Naive thymus-derived CD4-positive, alpha-beta T cell (primary cell): ENCODE measurements at regions of chr6 and their contacts with region 1.

Region 1: DNA sequence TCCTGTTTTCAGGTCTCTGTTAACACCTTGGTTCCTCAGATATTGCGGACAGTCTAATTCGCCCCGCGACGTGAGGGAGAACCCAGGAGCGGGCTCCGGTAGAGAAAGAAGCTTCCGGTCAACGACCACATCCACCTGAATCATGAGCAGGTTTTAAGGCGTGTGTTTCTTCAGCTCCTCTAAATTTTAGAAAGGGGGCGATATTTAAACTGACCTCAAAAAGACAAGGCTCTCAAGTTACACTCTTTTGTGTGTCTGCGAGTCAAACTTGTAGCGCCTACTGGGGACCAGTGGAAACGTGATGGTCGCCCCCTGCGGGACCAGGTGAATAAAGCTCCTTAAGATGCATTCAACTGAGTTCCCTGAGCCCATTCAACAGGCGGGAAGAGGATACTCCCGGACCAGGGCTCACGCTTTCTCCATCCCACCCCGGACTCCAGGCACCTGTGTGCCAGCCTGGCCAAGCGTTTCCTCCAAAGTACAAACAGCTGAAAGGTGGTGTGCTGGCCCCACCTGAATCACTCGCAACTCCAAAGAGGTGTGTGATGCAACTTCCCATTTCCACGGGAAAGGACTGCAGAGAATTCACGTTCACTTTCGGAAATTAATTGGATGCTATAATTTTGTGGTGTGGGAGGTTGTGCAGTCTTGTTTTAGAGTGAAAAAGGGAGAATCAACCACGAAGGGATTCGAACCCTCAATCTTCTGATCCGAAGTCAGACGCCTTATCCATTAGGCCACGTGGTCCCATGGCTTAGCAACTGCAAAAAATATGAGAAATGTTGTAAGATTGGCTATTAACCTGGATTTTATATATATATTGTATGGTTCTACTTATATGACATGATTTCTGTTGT is 17.0 kb downstream of the GPX5 start:
- DNase-seq: peak; percentile 25 to 76 (median 68)
- ATAC-seq: peak; percentile 75
- H3K4me3 ChIP-seq: peak overlapping the region; percentile 62
- H3K4me3 Mint-ChIP-seq: peak overlapping the region; percentile 79 to 94 (median 88)
- H3K27ac ChIP-seq: no peak overlapping the region
- H3K27ac Mint-ChIP-seq: peak overlapping the region; percentile 26 to 92 (median 85)
- H3K4me1 ChIP-seq: peaks cover 0 to 12% of the 10 kb centered on the region in 2 donors
- H3K4me1 Mint-ChIP-seq: peaks cover 15 to 46% (median 37%) of the 10 kb centered on the region in 7 donors
- H3K27me3 ChIP-seq: peaks cover 0 to 11% of the 10 kb centered on the region in 2 donors
- H3K27me3 Mint-ChIP-seq: peaks cover 0 to 84% (median 51%) of the 10 kb centered on the region in 5 donors

Region 2: DNA sequence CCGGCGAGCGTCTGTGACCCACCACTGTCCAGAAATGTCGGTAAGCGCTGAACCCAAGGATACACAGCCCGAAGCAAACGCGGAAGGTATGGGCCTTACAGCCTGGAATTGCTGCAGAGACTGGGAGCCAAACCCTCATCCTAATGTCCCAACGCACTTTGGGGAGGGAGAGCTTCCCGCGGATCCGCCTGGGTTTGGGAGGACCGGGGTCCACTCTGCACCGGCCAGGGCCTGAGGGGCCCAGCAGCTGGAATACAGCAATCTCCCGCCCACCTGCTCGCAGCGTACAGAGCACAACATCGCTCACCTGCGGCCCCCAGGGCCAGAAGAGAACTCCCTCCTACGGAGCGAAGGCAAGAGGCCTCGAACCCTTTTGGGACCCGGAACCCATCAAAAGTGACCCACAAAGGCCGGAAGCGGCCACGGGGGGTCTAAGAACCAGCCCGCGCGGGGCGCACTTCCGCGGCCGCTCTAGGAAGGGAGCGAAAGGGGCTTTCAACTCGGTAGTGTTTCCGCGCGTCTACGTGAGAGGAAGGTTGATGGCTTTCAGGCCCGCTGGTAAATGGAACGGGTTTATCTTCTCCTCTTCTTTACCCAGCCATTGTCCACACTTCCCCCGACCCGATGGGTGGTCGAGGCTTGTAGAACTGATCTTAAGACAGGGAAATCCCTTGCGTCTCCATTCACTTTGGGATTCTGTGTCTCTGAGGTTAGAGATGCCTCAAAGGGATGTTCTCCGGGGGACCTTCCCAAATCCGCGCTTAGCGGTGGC is 143.1 kb before region 1 on chr6 and contains the start of gene ZSCAN12:
- CTCF ChIA-PET with region 1: interaction called, 3 read pairs
- POLR2A ChIA-PET with region 1: interaction called, 3 read pairs
- intact Hi-C with region 1: loop called (anchors 1 kb)
- DNase-seq: peak; percentile 73 to 87 (median 81)
- ATAC-seq: peak; percentile 97
- H3K4me3 ChIP-seq: peak within 1 kb of the TSS; percentile 88
- H3K4me3 Mint-ChIP-seq: peak within 1 kb of the TSS; percentile 84 to 96 (median 92)
- H3K27ac ChIP-seq: peak within 1 kb of the TSS; percentile 74
- H3K27ac Mint-ChIP-seq: peak within 1 kb of the TSS; percentile 77 to 96 (median 93)
- H3K4me1 ChIP-seq: peaks cover 8 to 30% of the 10 kb centered on the region in 2 donors
- H3K4me1 Mint-ChIP-seq: peaks cover 30 to 54% (median 47%) of the 10 kb centered on the region in 7 donors
- H3K27me3 ChIP-seq: no peaks in the 10 kb centered on the region
- H3K27me3 Mint-ChIP-seq: peaks cover 0 to 33% (median 22%) of the 10 kb centered on the region in 5 donors
- total RNA-seq, gene ZSCAN12: 2.9 to 10.3 (median 7.4) TPM

Region 3: DNA sequence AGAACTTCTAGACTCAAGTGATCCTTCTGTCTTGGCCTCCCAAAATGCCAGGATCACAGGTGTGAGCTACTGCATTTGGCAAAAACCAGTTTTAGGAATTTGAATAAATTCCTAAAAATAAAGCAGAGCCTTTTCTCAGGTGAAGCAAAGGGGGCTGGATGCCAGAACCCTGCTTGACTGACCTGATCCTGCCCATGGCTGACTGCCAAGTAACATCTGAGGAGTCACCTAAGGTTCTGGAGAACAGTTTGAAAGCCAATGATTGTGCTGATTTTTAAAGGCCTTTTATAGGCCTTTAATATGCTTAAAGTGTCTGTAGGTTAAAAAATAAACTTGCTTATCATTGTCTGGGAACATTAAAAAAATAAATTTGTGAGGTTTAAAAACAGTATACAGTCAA is 129.0 kb before region 1 on chr6:
- CTCF ChIA-PET with region 1: no interaction called
- POLR2A ChIA-PET with region 1: no interaction called
- intact Hi-C with region 1: no loop called
- DNase-seq: no peak
- ATAC-seq: no peak
- H3K4me3 ChIP-seq: no peak overlapping the region
- H3K4me3 Mint-ChIP-seq: no peak overlapping the region
- H3K27ac ChIP-seq: no peak overlapping the region
- H3K27ac Mint-ChIP-seq: no peak overlapping the region
- H3K4me1 ChIP-seq: no peaks in the 10 kb centered on the region
- H3K4me1 Mint-ChIP-seq: peaks cover 0 to 2% (median 0%) of the 10 kb centered on the region in 7 donors
- H3K27me3 ChIP-seq: no peaks in the 10 kb centered on the region
- H3K27me3 Mint-ChIP-seq: peaks cover 9 to 30% (median 20%) of the 10 kb centered on the region in 5 donors

Region 4: GRCh38 chr6:28474441-28475219 is 68.0 kb before region 1 on chr6:
- CTCF ChIA-PET with region 1: no interaction called
- POLR2A ChIA-PET with region 1: no interaction called
- intact Hi-C with region 1: loop called in 1 of 2 experiments (anchors 2 kb)
- DNase-seq: peak in 7 of 9 donors; percentile 10 to 36 (median 21)
- ATAC-seq: no peak
- H3K4me3 ChIP-seq: no peak overlapping the region
- H3K4me3 Mint-ChIP-seq: peak overlapping the region; percentile 4 to 68 (median 31)
- H3K27ac ChIP-seq: no peak overlapping the region
- H3K27ac Mint-ChIP-seq: peak overlapping the region in 1 of 9 donors; percentile 20
- H3K4me1 ChIP-seq: no peaks in the 10 kb centered on the region
- H3K4me1 Mint-ChIP-seq: peaks cover 2 to 16% (median 10%) of the 10 kb centered on the region in 7 donors
- H3K27me3 ChIP-seq: peaks cover 0 to 7% of the 10 kb centered on the region in 2 donors
- H3K27me3 Mint-ChIP-seq: peaks cover 50 to 74% (median 64%) of the 10 kb centered on the region in 5 donors

Region 5: GRCh38 chr6:28496099-28496779 is 46.4 kb before region 1 on chr6:
- CTCF ChIA-PET with region 1: interaction called, 11 read pairs
- POLR2A ChIA-PET with region 1: interaction called, 4 read pairs
- intact Hi-C with region 1: loop called in 1 of 2 experiments (anchors 2 kb)
- DNase-seq: peak in 2 of 9 donors; percentile 17 to 25
- ATAC-seq: no peak
- H3K4me3 ChIP-seq: no peak overlapping the region
- H3K4me3 Mint-ChIP-seq: no peak overlapping the region
- H3K27ac ChIP-seq: no peak overlapping the region
- H3K27ac Mint-ChIP-seq: no peak overlapping the region
- H3K4me1 ChIP-seq: no peaks in the 10 kb centered on the region
- H3K4me1 Mint-ChIP-seq: peaks cover 0 to 8% (median 0%) of the 10 kb centered on the region in 7 donors
- H3K27me3 ChIP-seq: no peaks in the 10 kb centered on the region
- H3K27me3 Mint-ChIP-seq: peaks cover 9 to 52% (median 43%) of the 10 kb centered on the region in 5 donors

Region 6: DNA sequence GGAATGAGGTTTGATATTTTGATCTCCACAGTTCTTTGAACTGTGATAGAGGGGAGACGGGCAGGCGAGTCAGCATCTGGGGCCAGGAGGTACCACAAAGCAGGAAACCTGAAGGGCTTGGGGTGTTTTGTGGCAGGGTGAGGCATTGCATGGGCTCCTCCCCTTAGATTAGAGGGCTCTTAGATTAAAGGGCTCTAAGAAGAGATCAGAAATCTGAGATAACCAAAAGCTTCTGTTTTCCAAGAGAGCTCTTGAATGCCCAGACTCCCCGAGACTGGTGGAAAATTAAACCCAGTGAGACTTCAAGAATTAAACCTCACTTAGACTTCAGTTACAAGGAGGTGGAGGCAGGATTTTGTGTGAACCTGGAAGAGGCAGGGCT is 19.4 kb before region 1 on chr6:
- CTCF ChIA-PET with region 1: interaction called, 5 read pairs
- POLR2A ChIA-PET with region 1: interaction called, 3 read pairs
- intact Hi-C with region 1: loop called in 1 of 2 experiments (anchors 1 kb)
- DNase-seq: peak in 7 of 9 donors; percentile 40 to 59 (median 53)
- ATAC-seq: peak; percentile 95
- H3K4me3 ChIP-seq: no peak overlapping the region
- H3K4me3 Mint-ChIP-seq: peak overlapping the region; percentile 13 to 77 (median 67)
- H3K27ac ChIP-seq: no peak overlapping the region
- H3K27ac Mint-ChIP-seq: peak overlapping the region in 4 of 9 donors; percentile 24 to 79 (median 59)
- H3K4me1 ChIP-seq: peaks cover 0 to 25% of the 10 kb centered on the region in 2 donors
- H3K4me1 Mint-ChIP-seq: peaks cover 10 to 40% (median 30%) of the 10 kb centered on the region in 7 donors
- H3K27me3 ChIP-seq: no peaks in the 10 kb centered on the region
- H3K27me3 Mint-ChIP-seq: peaks cover 0 to 66% (median 47%) of the 10 kb centered on the region in 5 donors

Region 7: DNA sequence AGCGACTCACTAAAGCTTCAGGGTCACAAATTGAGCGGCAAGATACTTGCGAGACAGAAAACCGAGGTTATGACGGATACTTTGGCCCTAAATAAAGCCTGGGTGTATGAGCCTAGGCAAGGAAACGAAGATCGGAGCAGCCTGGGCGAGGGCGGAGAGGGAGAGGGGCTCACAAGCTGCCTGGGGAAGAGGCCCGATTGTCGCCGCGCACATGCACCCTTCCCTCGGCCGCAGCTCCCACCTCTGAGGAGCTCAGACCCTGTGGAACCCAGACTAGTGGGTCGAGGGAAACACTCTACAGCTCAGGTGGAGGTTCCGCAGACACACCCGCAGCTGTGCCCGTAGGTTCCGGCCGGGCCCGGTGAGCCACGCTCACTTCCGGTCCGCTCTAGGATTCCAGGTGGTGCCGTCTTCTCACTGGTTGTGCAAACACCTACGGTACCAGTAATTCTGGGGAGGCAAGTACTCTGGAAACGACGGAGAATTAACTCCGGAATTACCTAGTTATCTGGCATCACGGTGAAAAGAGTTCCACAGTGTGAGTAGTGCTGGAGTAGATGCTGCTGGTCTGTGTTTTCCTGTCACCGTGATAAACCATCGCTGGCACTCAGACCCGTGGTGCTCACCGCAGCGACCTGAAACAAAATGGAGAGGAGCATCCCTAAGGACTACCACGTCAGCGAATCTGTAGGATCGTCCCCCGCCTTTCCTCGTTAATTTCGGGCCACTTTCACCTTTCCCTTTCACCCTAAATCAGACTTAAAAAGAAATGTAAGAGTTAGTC is 44.5 kb after region 1 on chr6:
- CTCF ChIA-PET with region 1: interaction called, 3 read pairs
- POLR2A ChIA-PET with region 1: no interaction called
- intact Hi-C with region 1: loop called in 1 of 2 experiments (anchors 5 kb)
- DNase-seq: peak; percentile 29 to 70 (median 60)
- ATAC-seq: peak; percentile 77
- H3K4me3 ChIP-seq: peak overlapping the region; percentile 54
- H3K4me3 Mint-ChIP-seq: peak overlapping the region; percentile 82 to 90 (median 88)
- H3K27ac ChIP-seq: no peak overlapping the region
- H3K27ac Mint-ChIP-seq: peak overlapping the region in 8 of 9 donors; percentile 5 to 88 (median 60)
- H3K4me1 ChIP-seq: peaks cover 0 to 9% of the 10 kb centered on the region in 2 donors
- H3K4me1 Mint-ChIP-seq: peaks cover 11 to 43% (median 34%) of the 10 kb centered on the region in 7 donors
- H3K27me3 ChIP-seq: peaks cover 10 to 28% of the 10 kb centered on the region in 2 donors
- H3K27me3 Mint-ChIP-seq: peaks cover 57 to 85% (median 76%) of the 10 kb centered on the region in 5 donors